ENCODE measurements at regions of chr16 and their contacts with region 1.

Region 1: GRCh38 chr16:648781-649589 is at the start of gene WDR90:
- DNase-seq: peak; percentile 95
- ATAC-seq: peak; percentile 84
- H3K4me3 Mint-ChIP-seq: peak within 1 kb of the TSS; percentile 78
- H3K27ac Mint-ChIP-seq: peak within 1 kb of the TSS; percentile 78
- H3K4me1 Mint-ChIP-seq: peaks cover 15% of the 10 kb centered on the region
- H3K27me3 Mint-ChIP-seq: no peaks in the 10 kb centered on the region
- total RNA-seq, gene WDR90: 96.8 to 106 TPM

Region 2: GRCh38 chr16:621528-622105 is 27.4 kb before region 1 on chr16:
- CTCF ChIA-PET with region 1: no interaction called
- POLR2A ChIA-PET with region 1: no interaction called
- DNase-seq: no peak
- ATAC-seq: no peak
- H3K4me3 Mint-ChIP-seq: no peak overlapping the region
- H3K27ac Mint-ChIP-seq: no peak overlapping the region
- H3K4me1 Mint-ChIP-seq: no peaks in the 10 kb centered on the region
- H3K27me3 Mint-ChIP-seq: no peaks in the 10 kb centered on the region

Region 3: DNA sequence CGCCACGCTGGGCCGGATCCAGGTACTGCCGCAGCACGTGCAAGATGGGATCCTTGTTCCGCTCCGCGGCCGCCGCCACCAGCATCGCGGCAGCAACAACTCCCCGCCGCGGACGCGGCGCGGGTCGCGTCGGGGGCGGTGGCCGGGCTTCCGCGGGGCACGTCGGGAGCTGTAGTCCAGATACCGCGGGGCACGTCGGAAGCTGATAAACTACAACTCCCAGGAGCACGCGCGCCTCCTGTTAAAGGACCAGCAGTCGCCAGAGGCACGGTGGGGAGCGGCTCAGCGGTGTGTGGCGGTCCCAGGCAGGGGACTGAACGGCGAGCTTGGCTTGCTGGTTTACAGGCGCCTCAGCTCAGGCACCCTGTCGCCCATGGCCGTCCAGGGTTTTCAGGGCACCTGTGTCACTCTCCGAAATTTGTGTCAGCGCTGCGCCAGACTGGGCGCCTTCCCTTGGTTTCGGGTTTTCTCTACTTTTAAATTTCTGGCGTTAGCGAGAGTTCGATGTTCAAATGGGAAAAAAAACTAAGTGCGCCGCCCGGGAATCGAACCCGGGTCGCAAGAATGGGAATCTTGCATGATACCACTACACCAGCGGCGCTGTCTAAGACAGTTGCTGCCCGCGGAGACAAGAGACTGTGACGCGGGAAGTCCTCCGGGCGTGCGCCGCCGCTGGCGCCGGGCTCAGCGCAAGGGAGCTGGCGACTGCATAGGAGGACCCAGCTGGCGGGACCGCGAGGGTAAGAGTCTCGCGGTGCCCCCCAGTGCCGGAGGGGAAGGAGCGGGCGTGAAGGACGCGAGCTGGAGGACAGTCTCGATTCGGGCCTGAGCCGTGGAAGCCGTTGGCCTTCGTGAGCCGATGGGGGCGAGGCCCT is 12.5 kb before region 1 on chr16 and contains the start of gene METTL26:
- CTCF ChIA-PET with region 1: interaction called, 16 read pairs
- POLR2A ChIA-PET with region 1: no interaction called
- DNase-seq: peak; percentile 96
- ATAC-seq: peak; percentile 86
- H3K4me3 Mint-ChIP-seq: peak within 1 kb of the TSS; percentile 90
- H3K27ac Mint-ChIP-seq: peak within 1 kb of the TSS; percentile 88
- H3K4me1 Mint-ChIP-seq: peaks cover 10% of the 10 kb centered on the region
- H3K27me3 Mint-ChIP-seq: peaks cover 2% of the 10 kb centered on the region
- total RNA-seq, gene METTL26: 89.0 to 94.0 TPM

Measured in activated CD8-positive, alpha-beta T cell treated with anti-CD3 and anti-CD28 coated beads, Interleukin-2, amount 10 ng/mL, durations not matched to agents 7 days and 5 days (primary cell).